Lower lobe of right lung (tissue), 2 donors: ENCODE measurements at regions of chr17 and their contacts with region 1.

Region 1: GRCh38 chr17:56592487-56593085 is 913 bp upstream of the NOG start:
- DNase-seq: peak; percentile 73
- ATAC-seq: peak; percentile 87 to 89
- H3K4me3 ChIP-seq: peak overlapping the region; percentile 68
- H3K27ac ChIP-seq: no peak overlapping the region
- H3K4me1 ChIP-seq: peaks cover 32% of the 10 kb centered on the region
- H3K27me3 ChIP-seq: peaks cover 57% of the 10 kb centered on the region
- CTCF ChIP-seq: peak; percentile 97

Region 2: DNA sequence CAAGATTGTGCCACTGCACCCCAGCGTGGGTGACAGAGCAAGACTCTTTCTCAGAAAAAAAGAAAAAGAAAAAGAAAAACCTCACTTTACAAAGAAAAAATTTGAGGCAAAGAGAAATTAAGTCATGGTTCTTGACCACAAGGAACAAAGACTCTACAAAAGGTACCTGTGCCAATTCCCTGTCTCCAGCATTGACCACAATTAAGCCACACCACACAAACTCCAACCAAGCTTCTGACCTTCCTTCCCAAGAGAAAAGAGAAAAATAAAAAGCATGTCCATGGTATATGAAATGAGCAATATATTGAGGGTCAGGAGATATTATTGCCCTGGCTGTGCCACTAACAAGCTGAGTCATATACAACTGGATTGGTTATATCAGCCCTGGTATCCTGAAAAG is 145.4 kb before region 1 on chr17:
- intact Hi-C with region 1: no loop called
- DNase-seq: no peak
- ATAC-seq: no peak
- H3K4me3 ChIP-seq: no peak overlapping the region
- H3K27ac ChIP-seq: no peak overlapping the region
- H3K4me1 ChIP-seq: no peaks in the 10 kb centered on the region
- H3K27me3 ChIP-seq: no peaks in the 10 kb centered on the region
- CTCF ChIP-seq: no peak

Region 3: DNA sequence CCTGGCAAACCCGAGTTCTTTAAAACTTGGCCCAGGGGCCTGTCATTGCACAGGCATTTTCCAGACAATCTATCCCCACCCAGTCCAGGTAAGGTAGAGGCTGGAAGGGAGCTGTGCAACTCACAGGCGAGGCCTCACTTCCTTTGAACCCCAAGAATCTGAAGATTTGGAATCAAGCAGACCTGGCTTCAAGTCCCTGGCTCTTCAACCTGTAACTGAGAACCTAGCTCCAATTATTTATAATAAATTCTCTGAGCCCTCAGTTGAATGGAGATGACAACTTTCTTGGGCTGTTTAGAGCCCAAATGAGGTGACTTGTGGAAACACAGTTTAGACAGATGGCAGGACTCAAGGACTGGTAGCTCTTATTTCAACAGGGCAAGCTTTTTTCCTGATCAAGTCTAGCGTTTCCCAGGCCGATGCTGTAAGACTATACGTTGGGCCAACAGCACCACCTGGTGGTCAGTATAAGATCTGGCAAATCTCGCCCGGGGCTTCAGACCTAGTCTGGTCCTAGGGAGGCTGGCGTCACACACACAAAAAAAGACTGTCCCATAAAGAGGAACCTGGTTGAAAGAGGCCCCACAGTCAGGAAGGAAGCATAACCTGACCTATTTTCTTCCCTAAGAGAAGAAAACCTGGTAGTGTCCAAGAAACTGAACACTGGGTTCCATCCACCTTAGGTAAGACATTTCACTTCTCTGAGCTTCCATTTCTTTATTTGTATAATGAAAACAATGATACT is 123.2 kb after region 1 on chr17:
- intact Hi-C with region 1: loop called (anchors 10 kb)
- DNase-seq: peak; percentile 76
- ATAC-seq: peak; percentile 93
- H3K4me3 ChIP-seq: no peak overlapping the region
- H3K27ac ChIP-seq: no peak overlapping the region
- H3K4me1 ChIP-seq: no peaks in the 10 kb centered on the region
- H3K27me3 ChIP-seq: no peaks in the 10 kb centered on the region
- CTCF ChIP-seq: peak; percentile 88